Left ventricle myocardium inferior (tissue), 1 donor: ENCODE measurements at regions of chr2 and their contacts with region 1.

Region 1: DNA sequence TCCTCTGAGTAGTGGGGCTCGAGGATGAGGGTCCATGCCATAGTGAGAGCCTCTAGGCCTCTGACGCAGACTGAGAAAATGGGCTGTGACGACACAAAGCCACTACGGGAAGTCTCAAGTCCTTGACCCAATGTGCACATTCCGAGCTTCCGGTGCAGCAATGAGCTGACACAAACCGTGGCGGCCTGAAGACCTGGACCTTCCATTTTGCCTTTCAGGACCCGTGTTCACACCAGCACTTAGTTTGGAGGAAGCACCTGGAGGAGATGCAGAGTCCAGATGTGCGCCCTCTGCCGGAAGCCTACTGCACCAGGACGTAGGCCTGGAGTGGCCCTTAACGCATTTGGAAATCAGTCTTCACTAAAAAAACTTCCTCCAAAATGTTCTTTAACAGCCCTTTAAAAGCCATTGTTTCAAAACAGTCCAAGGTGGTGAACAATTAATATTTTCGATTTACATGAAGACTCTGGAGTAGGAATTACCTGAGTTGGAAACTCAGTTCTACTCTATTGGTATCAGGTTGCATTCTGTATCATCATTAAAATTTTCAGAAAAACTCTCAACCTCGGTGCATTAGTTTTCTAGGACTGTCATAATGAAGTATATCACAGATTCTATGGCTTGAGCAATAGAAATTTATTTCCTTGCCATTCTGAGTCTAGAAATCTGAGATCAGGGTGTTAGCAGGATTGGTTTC is 33.9 kb downstream of the BMP10 start:
- DNase-seq: peak; percentile 71
- H3K4me3 ChIP-seq: no peak overlapping the region
- H3K27ac ChIP-seq: no peak overlapping the region
- H3K4me1 ChIP-seq: peaks cover 10% of the 10 kb centered on the region
- H3K27me3 ChIP-seq: peaks cover 10% of the 10 kb centered on the region
- CTCF ChIP-seq: peak; percentile 74

Region 2: DNA sequence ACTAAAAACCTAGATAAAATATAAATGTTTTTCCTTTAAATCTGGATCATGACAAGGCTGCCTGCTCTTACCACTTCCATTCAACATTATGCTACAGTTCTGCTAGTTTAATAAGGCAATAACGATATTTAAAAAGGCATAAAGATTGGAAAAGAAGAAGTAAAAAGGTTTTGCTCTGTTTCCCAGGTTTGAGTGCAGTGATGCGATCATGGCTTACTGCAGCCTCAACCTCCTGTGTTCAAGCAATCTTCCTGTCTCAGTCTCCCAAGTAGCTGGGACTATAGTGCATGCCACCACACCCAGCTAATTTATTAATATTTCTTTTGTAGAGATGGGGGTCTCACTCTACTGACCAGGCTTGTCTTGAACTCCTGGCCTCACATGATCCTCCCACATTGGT is 153.1 kb before region 1 on chr2:
- intact Hi-C with region 1: no loop called
- DNase-seq: no peak
- H3K4me3 ChIP-seq: no peak overlapping the region
- H3K27ac ChIP-seq: no peak overlapping the region
- H3K4me1 ChIP-seq: no peaks in the 10 kb centered on the region
- H3K27me3 ChIP-seq: no peaks in the 10 kb centered on the region
- CTCF ChIP-seq: no peak

Region 3: DNA sequence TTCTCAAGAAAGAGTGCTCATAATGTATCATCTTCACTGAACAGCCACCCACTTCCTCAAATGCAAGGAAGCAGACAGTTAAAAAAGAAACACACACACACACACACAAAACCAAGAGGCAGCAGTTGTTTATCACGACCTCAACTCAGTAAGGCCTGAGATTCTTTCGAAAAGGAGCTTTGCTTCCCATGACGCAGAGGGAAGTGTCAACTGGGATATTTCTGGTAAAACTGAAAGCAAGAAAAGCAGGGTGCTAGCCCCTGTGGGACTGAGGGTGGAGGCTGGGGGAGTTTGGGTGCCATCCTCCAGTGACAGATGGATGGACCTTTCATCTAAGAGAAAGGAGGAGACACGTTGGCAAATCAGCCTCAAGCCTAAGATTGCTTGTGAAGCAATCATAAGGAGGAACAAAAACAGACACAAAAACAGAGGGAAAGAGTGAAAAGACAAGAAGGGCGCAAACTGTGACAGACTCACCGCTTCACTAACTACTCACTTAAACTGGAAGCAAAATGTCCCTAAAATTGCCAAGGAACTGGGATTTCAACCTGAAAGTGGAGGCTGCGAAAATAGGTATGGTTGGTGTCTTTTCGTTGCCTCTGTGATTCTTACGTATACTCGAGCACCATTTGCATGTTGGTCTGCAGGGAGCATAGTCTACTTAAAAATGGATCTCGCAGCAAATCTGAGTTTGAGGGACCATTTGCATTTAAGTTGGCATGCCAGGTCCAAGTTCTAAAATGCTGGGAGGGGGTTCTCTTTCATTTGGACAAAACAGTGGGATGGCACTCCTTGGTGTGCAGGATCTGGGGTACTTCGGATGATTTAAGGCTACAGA is 102.4 kb before region 1 on chr2 and contains the start of gene ARHGAP25:
- intact Hi-C with region 1: no loop called
- DNase-seq: no peak
- H3K4me3 ChIP-seq: peak within 1 kb of the TSS; percentile 26
- H3K27ac ChIP-seq: peak within 1 kb of the TSS; percentile 40
- H3K4me1 ChIP-seq: no peaks in the 10 kb centered on the region
- H3K27me3 ChIP-seq: no peaks in the 10 kb centered on the region
- CTCF ChIP-seq: no peak
- total RNA-seq, gene ARHGAP25: 5.3 TPM

Region 4: GRCh38 chr2:68751397-68752339 is 85.6 kb before region 1 on chr2:
- intact Hi-C with region 1: loop called (anchors 5 kb)
- DNase-seq: peak; percentile 88
- H3K4me3 ChIP-seq: peak overlapping the region; percentile 33
- H3K27ac ChIP-seq: peak overlapping the region; percentile 2
- H3K4me1 ChIP-seq: peaks cover 20% of the 10 kb centered on the region
- H3K27me3 ChIP-seq: no peaks in the 10 kb centered on the region
- CTCF ChIP-seq: peak; percentile 96